ENCODE measurements at regions of chr2 and their contacts with region 1.

Region 1: DNA sequence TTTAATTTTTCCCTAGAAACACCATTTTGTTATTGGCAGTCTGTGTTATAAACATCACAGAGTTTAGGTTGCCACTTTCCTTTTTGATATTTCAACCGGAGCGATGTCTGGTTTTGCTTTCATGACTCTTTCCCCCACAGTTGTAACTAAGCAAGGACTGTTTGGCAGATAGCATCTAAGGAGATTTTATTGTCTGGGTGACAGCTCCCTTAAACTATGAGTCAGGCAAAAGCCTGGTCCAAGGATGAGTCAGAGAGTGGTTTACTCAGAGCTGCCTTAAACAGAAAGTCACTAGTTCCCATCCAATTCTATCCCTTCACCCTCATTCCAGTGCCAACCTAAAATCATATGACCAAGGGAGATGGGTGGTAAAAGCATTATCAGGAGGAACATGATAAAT is 341.6 kb upstream of the VWC2L start:
- DNase-seq: peak; percentile 91
- H3K4me3 Mint-ChIP-seq: no peak overlapping the region
- H3K27ac Mint-ChIP-seq: no peak overlapping the region
- H3K4me1 Mint-ChIP-seq: no peaks in the 10 kb centered on the region
- H3K27me3 Mint-ChIP-seq: no peaks in the 10 kb centered on the region
- CTCF ChIP-seq: no peak

Region 2: DNA sequence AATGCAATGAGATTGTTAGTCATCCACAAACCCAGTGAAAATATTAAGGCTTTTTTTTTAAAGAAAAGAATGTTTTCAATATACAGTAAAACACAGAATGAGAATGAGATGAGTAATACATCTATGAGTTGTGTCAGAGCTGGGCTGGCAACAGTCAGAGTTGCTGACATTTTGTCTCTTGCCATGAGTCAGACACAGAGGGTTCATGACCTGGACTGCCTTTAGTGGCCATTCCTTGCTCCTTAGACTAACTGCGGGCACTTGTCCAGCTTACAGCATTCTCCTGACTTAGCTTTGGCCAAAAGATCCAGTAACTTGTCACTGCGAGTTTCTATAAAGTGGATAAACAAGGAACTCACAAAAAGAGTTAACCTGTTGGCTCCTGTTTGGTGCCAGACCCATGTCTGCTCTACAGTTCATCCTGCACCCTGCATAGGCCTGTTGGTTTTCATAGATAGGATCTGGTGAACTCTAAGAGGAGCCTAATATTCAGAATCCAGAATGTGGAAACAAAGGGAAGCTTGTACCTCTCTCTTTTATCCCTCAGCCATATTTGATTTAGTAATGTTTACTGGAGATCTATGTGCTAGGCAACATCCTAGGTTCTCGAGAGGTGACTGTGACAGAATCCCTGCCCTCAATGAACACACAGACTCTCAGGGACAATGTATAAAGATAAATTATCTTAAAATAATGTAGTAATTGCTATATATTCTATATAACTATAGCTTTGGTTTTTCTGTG is 49.9 kb before region 1 on chr2:
- CTCF ChIA-PET with region 1: no interaction called
- POLR2A ChIA-PET with region 1: no interaction called
- intact Hi-C with region 1: loop called (anchors 2 kb)
- DNase-seq: peak; percentile 97
- H3K4me3 Mint-ChIP-seq: no peak overlapping the region
- H3K27ac Mint-ChIP-seq: peak overlapping the region; percentile 20
- H3K4me1 Mint-ChIP-seq: no peaks in the 10 kb centered on the region
- H3K27me3 Mint-ChIP-seq: no peaks in the 10 kb centered on the region
- CTCF ChIP-seq: no peak